ENCODE measurements at regions of chr16 and their contacts with region 1.

Region 1: GRCh38 chr16:67084345-67085028 is 25.3 kb upstream of the PHAF1 start:
- DNase-seq: no peak
- ATAC-seq: peak; percentile 79 to 90
- H3K4me3 ChIP-seq: no peak overlapping the region
- H3K27ac ChIP-seq: peak overlapping the region; percentile 30 to 64 (median 52)
- H3K4me1 ChIP-seq: peaks cover 27 to 53% of the 10 kb centered on the region in 2 donors
- H3K27me3 ChIP-seq: no peaks in the 10 kb centered on the region
- CTCF ChIP-seq: no peak
- POLR2A ChIP-seq: no peak

Region 2: DNA sequence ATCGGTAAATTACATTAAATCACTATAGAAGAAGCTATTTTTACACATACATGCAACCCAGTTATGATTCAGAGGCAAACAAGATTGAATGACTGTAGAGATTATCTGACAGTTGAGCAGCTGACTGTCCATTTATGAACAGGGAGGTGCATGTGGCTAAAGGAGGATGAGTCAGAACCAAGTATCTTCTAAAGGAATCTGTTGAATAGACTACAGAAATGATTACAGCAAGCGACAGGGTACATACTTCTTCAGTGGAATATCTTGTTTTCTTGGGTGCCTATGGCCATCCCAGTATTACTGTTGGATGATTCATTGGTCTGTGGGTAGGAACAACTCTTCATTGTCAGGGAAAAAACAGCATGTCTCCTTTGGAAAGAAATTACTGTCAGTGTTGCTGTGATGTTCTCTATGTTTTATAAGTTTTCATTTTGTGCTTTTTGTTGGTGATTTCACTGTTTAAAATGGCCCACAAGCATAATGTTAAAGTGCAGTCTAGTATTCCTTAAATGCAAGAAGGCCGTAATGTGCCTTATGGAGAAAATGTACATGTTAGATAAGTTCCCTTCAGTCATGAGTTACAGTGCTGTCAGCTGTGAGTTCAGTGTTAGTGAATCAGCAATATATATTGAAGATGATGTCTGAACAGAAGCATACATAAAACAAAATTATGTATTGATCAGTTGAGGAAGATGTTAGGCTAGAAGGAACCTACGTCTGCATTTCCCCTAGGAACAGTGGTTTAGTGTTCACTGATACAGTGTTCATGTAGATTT is 28.6 kb before region 1 on chr16:
- in situ Hi-C with region 1: no loop called
- intact Hi-C with region 1: loop called (anchors 2 kb)
- DNase-seq: peak; percentile 25 to 40
- ATAC-seq: peak; percentile 98 to 99
- H3K4me3 ChIP-seq: no peak overlapping the region
- H3K27ac ChIP-seq: peak overlapping the region; percentile 79 to 87 (median 86)
- H3K4me1 ChIP-seq: peaks cover 6 to 23% of the 10 kb centered on the region in 2 donors
- H3K27me3 ChIP-seq: no peaks in the 10 kb centered on the region
- CTCF ChIP-seq: no peak
- POLR2A ChIP-seq: no peak

Region 3: DNA sequence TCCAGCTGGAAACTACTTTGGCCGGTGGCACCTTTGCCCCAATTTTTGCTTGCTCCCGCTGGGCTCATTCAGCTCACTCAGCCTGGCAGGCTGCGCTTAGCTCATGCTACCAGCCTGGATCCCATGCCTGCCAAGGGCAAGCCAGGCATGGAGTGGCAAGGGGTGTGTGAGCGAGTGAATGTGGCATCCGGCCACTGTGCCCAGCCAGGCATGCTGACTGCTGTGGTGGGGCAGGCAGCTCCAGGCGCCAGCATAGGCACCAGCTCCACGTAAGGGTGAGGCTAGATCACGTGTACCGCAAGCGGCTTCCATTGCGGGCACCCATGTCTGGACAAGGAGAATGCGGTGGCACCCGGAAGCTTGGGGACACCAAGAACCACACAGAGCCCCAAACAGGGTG is 56.9 kb after region 1 on chr16:
- in situ Hi-C with region 1: no loop called
- intact Hi-C with region 1: loop called (anchors 5 kb)
- DNase-seq: peak in 1 of 2 donors; percentile 65
- ATAC-seq: peak; percentile 20 to 29
- H3K4me3 ChIP-seq: no peak overlapping the region
- H3K27ac ChIP-seq: peak overlapping the region; percentile 12 to 50 (median 32)
- H3K4me1 ChIP-seq: peaks cover 0 to 7% of the 10 kb centered on the region in 2 donors
- H3K27me3 ChIP-seq: no peaks in the 10 kb centered on the region
- CTCF ChIP-seq: no peak
- POLR2A ChIP-seq: no peak